ENCODE measurements at regions of chr2 and their contacts with region 1.

Region 1: GRCh38 chr2:28594289-28595108 is 98.6 kb downstream of the PLB1 start:
- DNase-seq: peak; percentile 96
- H3K4me3 ChIP-seq: no peak overlapping the region
- H3K27ac ChIP-seq: peak overlapping the region; percentile 78 to 88 (median 83)
- H3K4me1 ChIP-seq: peaks cover 14 to 22% (median 16%) of the 10 kb centered on the region in 4 donors
- H3K27me3 ChIP-seq: no peaks in the 10 kb centered on the region
- CTCF ChIP-seq: peak; percentile 83 to 92 (median 84)
- EP300 ChIP-seq: no peak
- POLR2A ChIP-seq: peak; percentile 20

Region 2: GRCh38 chr2:28661589-28662001 is 67.1 kb after region 1 on chr2:
- in situ Hi-C with region 1: no loop called
- intact Hi-C with region 1: loop called (anchors 5 kb)
- DNase-seq: peak; percentile 75
- H3K4me3 ChIP-seq: no peak overlapping the region
- H3K27ac ChIP-seq: peak overlapping the region; percentile 83 to 91 (median 88)
- H3K4me1 ChIP-seq: peaks cover 42 to 90% (median 71%) of the 10 kb centered on the region in 4 donors
- H3K27me3 ChIP-seq: no peaks in the 10 kb centered on the region
- CTCF ChIP-seq: no peak
- EP300 ChIP-seq: peak; percentile 89
- POLR2A ChIP-seq: peak; percentile 21

Region 3: DNA sequence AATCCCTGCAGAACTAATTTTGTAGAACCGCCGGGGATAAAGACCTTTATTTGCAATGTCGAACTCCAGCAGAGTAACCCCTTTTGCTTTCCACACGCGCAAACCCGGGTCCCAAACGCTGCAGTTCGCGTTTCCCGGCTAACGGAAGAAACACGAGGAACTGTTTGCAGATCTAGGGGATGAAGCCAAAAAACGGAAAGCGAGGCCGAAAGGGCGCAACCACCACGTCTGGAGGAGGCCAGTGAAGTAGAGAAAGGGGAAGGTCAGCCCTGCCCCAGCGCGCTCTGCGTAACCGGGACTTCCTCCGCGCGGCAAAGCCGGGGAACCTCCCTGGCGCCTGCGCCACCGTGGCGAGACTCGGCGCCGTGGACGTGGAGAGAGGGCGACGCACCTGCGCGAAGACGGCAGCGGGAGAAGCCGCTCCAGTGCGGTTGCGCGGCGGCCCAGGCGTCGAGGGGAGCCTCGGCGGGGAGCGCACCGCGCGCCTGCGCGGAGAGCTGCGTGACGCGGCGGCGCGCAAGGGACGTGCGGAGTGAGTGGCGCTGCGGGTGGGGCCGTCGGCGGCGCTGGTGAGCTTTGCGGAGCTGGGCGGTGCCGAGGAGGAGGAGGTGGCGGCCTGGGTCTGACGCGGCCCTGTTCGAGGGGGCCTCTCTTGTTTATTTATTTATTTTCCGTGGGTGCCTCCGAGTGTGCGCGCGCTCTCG is 156.9 kb after region 1 on chr2 and contains the start of gene PPP1CB:
- in situ Hi-C with region 1: loop called (anchors 5 to 10 kb)
- intact Hi-C with region 1: loop called (anchors 2 kb)
- DNase-seq: peak; percentile 97
- H3K4me3 ChIP-seq: peak within 1 kb of the TSS; percentile 86 to 97 (median 91)
- H3K27ac ChIP-seq: peak within 1 kb of the TSS; percentile 99
- H3K4me1 ChIP-seq: peaks cover 11 to 72% (median 39%) of the 10 kb centered on the region in 4 donors
- H3K27me3 ChIP-seq: no peaks in the 10 kb centered on the region
- CTCF ChIP-seq: peak in 3 of 5 experiments; percentile 7 to 51 (median 34)
- EP300 ChIP-seq: no peak
- POLR2A ChIP-seq: peak; percentile 93
- total RNA-seq, gene PPP1CB: 132 to 245 (median 192) TPM

Region 4: DNA sequence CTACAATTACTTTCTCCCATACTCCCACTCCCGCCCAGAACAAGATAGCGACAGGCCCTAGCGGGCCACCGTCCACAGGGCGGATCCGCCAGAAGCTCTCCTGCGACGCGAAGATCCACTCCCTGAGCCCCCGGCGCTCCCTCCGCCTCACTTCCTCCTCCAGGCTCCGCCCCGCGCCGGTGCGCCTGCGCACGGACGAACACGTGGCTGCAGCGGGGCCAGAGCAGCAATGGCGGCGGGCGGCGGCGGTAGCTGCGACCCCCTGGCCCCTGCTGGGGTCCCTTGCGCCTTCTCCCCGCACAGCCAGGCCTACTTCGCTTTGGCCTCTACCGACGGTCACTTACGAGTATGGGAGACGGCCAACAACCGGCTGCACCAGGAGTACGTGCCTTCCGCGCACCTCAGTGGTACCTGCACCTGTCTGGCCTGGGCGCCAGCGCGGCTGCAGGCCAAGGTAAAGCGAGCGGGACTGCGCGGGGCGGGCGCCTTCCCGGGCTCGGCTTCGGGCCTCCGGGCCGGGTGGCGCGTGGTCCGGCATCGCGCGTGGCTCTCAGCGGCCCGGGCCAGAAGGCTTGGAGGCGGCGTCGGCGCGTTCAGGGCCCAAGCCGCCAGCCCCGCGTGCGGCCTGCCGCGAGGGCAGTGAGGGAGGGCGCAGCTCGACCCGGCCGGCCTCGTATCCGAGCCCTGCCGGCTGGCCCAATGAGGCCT is 300.1 kb after region 1 on chr2 and contains the start of gene WDR43:
- in situ Hi-C with region 1: loop called in 1 of 4 experiments (anchors 25 kb)
- intact Hi-C with region 1: no loop called
- DNase-seq: peak; percentile 98
- H3K4me3 ChIP-seq: peak within 1 kb of the TSS; percentile 66 to 99 (median 88)
- H3K27ac ChIP-seq: peak within 1 kb of the TSS; percentile 82 to 90 (median 88)
- H3K4me1 ChIP-seq: peaks cover 12 to 31% (median 29%) of the 10 kb centered on the region in 4 donors
- H3K27me3 ChIP-seq: no peaks in the 10 kb centered on the region
- CTCF ChIP-seq: no peak
- EP300 ChIP-seq: no peak
- POLR2A ChIP-seq: peak; percentile 82
- total RNA-seq, gene WDR43: 15.8 to 399 (median 46.0) TPM

Region 5: GRCh38 chr2:29223851-29224694 is 629.6 kb after region 1 on chr2:
- in situ Hi-C with region 1: loop called in 1 of 4 experiments (anchors 25 kb)
- intact Hi-C with region 1: no loop called
- DNase-seq: peak; percentile 26
- H3K4me3 ChIP-seq: no peak overlapping the region
- H3K27ac ChIP-seq: no peak overlapping the region
- H3K4me1 ChIP-seq: no peaks in the 10 kb centered on the region
- H3K27me3 ChIP-seq: peaks cover 7% of the 10 kb centered on the region
- CTCF ChIP-seq: no peak
- EP300 ChIP-seq: no peak
- POLR2A ChIP-seq: no peak

Region 6: GRCh38 chr2:30455114-30455738 is 1860.7 kb after region 1 on chr2:
- in situ Hi-C with region 1: no loop called
- intact Hi-C with region 1: no loop called
- DNase-seq: no peak
- H3K4me3 ChIP-seq: no peak overlapping the region
- H3K27ac ChIP-seq: peak overlapping the region; percentile 27 to 60 (median 48)
- H3K4me1 ChIP-seq: peaks cover 3 to 26% (median 16%) of the 10 kb centered on the region in 4 donors
- H3K27me3 ChIP-seq: no peaks in the 10 kb centered on the region
- CTCF ChIP-seq: no peak
- EP300 ChIP-seq: no peak
- POLR2A ChIP-seq: no peak

Measured in transverse colon (tissue), 4 donors.